Activated CD4-positive, alpha-beta memory T cell treated with anti-CD3 and anti-CD28 coated beads, Interleukin-2, amount 10 ng/mL, durations not matched to agents 7 days and 5 days (primary cell): ENCODE measurements at regions of chr6 and their contacts with region 1.

Region 1: DNA sequence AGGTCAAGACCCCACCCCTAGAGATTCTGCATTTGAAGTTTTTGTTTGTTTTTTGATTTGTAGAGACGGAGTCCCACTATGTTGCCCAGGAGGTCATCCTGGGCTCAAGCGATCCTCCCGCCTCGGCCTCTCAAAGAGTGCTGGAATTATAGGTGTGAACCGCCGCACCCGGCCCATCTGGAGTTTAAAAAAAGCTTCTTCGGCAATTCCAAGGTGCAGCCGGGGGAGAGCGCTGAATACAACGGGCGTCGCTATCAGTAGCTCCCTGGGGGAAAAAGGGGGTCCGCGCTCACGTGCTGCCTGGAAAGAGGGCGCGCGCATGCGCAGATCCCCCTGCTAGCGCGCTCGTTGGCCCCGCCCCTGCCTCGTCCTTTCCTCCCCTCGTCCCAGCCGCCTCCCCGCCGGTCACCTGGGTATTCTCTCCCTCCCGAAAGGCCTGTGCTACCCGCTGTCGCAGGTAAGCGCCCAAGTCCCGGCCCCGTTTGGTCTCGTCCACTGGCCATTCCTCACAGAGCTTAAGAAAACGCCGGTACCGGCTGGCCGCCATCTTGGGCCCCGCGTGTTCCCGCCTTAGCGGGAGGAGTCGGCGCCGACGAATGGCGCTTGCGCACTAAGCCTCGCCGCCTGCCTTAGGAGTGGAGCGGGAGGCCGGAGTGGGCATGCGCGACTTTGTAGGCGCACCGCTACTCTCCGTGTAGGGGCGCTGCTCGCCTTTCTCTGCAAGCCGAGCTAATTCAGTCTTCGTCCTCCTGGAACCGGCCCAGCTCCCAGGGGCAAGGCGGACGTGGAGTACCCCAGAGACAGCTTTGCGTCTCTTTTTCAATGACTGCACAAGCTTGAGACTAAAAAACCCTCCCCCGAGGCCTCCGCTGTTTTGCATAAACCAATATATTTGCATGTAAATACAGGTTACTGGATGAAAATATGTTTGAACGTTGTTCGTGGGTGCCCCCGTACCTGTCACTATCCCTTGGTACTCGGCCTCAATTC is at the start of gene UQCC2:
- DNase-seq: peak; percentile 98
- H3K4me3 Mint-ChIP-seq: peak within 1 kb of the TSS; percentile 97
- H3K27ac Mint-ChIP-seq: peak within 1 kb of the TSS; percentile 90
- H3K4me1 Mint-ChIP-seq: peaks cover 42% of the 10 kb centered on the region
- H3K27me3 Mint-ChIP-seq: peaks cover 3% of the 10 kb centered on the region
- total RNA-seq, gene UQCC2: 70.7 to 75.3 TPM

Region 2: GRCh38 chr6:33585403-33586107 is 125.9 kb before region 1 on chr6:
- CTCF ChIA-PET with region 1: interaction called, 14 read pairs
- POLR2A ChIA-PET with region 1: interaction called, 11 read pairs
- DNase-seq: peak; percentile 91
- H3K4me3 Mint-ChIP-seq: peak overlapping the region; percentile 66
- H3K27ac Mint-ChIP-seq: peak overlapping the region; percentile 89
- H3K4me1 Mint-ChIP-seq: peaks cover 38% of the 10 kb centered on the region
- H3K27me3 Mint-ChIP-seq: no peaks in the 10 kb centered on the region

Region 3: DNA sequence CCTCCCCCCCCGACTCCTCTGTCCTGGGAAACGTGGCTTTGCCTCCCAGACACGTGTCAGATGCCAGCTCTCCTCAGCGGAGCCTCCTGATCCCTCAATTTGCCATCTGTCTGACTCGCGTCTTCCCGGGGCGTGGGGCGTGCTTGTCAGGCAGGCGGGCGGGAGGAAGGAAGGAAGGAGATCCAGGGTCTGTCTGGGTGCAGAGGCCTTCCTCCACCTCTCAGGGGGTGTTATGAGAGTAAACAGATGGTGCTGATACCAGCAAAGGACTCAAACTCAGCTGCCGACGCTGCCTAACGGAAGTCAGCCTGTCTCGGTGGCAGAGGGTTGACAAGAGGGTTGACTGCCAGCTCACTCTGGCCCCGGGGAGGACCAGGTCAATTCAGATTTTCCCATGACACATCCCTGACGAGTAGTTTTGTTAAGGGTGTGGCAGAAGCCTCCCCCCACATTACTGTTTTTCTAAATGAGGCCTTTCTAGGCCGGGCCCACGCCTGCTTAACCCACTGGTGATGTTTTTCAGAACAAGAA is 17.0 kb before region 1 on chr6:
- CTCF ChIA-PET with region 1: interaction called, 18 read pairs
- POLR2A ChIA-PET with region 1: interaction called, 16 read pairs
- DNase-seq: peak; percentile 75
- H3K4me3 Mint-ChIP-seq: peak overlapping the region; percentile 21
- H3K27ac Mint-ChIP-seq: peak overlapping the region; percentile 97
- H3K4me1 Mint-ChIP-seq: peaks cover 82% of the 10 kb centered on the region
- H3K27me3 Mint-ChIP-seq: no peaks in the 10 kb centered on the region

Region 4: GRCh38 chr6:33723371-33724085 is 12.1 kb after region 1 on chr6:
- CTCF ChIA-PET with region 1: interaction called, 13 read pairs
- POLR2A ChIA-PET with region 1: interaction called, 9 read pairs
- DNase-seq: no peak
- H3K4me3 Mint-ChIP-seq: no peak overlapping the region
- H3K27ac Mint-ChIP-seq: no peak overlapping the region
- H3K4me1 Mint-ChIP-seq: no peaks in the 10 kb centered on the region
- H3K27me3 Mint-ChIP-seq: peaks cover 56% of the 10 kb centered on the region

Region 5: DNA sequence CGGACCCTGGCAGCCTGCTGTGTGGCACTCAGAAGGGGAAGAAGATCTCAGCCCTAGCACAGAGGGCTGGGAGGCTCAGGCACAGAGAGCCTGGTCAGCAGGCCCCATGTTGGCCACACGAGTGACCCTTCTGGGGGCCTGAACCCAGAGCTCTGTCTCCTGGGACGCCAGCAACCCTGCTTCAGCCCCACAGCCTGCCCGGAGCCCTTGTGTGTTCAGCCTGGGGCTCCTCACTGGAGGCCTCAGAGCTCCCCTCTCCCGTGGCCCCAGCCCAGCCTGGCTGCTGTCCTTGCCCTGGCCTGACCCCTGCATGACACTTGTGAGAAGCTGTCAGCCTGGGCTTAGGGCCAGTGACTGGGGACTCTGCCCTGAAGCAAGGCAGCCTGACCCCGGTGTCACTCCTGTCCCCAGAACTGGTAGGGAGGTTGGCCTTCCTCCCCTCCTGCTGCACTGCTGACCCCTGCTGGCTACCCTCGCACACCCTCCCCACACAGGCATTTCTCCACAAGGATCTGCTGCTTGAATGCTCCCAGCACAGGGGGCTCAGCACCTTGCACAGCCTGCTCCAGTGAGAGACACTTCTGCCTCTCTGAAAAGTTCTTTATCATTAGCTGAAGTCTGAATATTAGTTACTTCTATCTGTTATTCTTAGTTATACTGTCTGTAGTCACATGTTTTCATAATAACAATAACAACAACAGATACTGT is 50.6 kb after region 1 on chr6:
- CTCF ChIA-PET with region 1: interaction called, 13 read pairs
- POLR2A ChIA-PET with region 1: interaction called, 4 read pairs
- DNase-seq: peak; percentile 59
- H3K4me3 Mint-ChIP-seq: no peak overlapping the region
- H3K27ac Mint-ChIP-seq: no peak overlapping the region
- H3K4me1 Mint-ChIP-seq: no peaks in the 10 kb centered on the region
- H3K27me3 Mint-ChIP-seq: no peaks in the 10 kb centered on the region

Region 6: GRCh38 chr6:33914645-33915044 is 203.2 kb after region 1 on chr6:
- CTCF ChIA-PET with region 1: no interaction called
- POLR2A ChIA-PET with region 1: no interaction called
- DNase-seq: peak; percentile 62
- H3K4me3 Mint-ChIP-seq: no peak overlapping the region
- H3K27ac Mint-ChIP-seq: peak overlapping the region; percentile 47
- H3K4me1 Mint-ChIP-seq: peaks cover 32% of the 10 kb centered on the region
- H3K27me3 Mint-ChIP-seq: peaks cover 4% of the 10 kb centered on the region